OCI-LY7 (cell line): ENCODE measurements at regions of chr1 and their contacts with region 1.

Region 1: DNA sequence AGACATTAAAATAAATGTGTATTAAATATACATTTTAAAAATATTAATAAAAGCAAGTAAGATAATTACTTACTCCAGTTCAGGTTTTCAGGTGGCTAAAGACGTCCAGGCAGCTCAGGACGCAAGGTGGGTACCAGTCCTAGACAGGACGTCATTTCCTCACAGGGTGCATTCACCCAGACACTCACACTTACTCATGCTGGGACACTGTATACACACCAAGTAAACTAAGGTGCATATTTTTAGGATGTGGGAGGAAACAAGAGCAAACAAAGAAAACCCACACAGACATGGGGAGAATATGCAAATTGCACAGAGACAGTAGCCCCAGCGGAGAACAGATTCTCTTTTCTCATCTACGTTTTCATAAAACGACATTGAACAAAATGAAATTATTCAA is 457.9 kb downstream of the BRINP3 start:
- DNase-seq: no peak
- H3K4me3 ChIP-seq: no peak overlapping the region
- H3K27ac ChIP-seq: no peak overlapping the region
- H3K4me1 ChIP-seq: no peaks in the 10 kb centered on the region
- CTCF ChIP-seq: no peak

Region 2: DNA sequence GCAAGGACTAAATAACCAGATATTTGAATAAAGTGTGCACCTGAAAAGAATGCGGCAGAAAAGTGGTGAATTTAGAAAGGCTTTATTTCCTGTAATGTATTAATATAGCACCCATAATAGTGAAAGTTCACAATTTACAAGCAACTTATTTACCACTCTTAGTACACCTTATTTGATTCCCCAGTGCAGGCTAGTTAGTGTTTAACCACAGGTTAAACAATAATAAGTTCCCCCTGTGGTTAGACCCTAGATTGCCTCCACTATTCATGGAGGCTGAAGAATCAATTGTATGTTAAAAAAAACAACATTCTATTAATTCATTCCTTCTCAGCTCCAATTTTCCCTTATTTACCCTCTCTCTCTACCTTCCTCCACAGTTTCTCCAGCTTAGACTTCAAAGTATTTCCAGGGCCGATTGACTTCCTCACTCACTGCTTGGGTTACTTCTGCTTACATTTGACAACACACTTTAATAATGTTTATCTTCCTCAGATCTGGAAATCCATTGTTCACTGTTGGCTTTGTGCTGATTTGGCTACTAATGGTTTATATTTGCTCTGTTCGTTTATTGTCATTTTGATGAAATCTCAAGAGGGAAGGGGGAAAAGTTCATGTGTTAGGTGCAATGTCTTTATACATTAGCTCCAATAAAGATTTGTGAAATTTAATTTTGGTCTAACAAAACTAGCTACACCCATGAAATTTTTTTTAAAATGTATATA is 338.3 kb before region 1 on chr1:
- CTCF ChIA-PET with region 1: no interaction called
- POLR2A ChIA-PET with region 1: no interaction called
- intact Hi-C with region 1: no loop called
- DNase-seq: no peak
- H3K4me3 ChIP-seq: no peak overlapping the region
- H3K27ac ChIP-seq: no peak overlapping the region
- H3K4me1 ChIP-seq: no peaks in the 10 kb centered on the region
- CTCF ChIP-seq: no peak

Region 3: DNA sequence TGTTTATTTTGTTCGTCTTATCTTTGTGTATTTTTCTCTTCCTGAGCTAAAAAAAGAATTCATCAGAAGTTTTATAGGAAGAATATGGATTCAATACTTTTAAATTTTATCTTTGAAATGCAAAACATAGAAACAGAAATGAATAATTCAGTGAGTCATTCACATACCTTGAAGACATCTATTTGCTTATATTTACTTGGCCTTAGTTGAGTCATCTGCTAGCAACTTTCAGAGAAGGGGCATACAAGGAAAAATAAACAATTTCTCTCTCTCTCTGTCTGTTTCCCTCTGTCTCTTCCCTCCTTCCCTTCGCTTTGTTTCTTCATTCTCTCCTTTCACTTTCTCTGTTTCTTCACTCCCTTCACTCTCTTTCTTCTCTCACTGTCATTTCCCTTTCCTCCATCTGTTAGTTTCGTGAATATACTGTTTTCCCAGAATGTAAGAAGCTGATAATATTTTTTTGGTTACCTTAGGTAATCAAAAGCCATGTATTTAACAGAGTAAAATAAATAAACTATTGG is 19.3 kb before region 1 on chr1:
- CTCF ChIA-PET with region 1: no interaction called
- POLR2A ChIA-PET with region 1: no interaction called
- intact Hi-C with region 1: loop called (anchors 2 kb)
- DNase-seq: no peak
- H3K4me3 ChIP-seq: no peak overlapping the region
- H3K27ac ChIP-seq: no peak overlapping the region
- H3K4me1 ChIP-seq: no peaks in the 10 kb centered on the region
- CTCF ChIP-seq: no peak